K562 (cell line): ENCODE measurements at regions of chr12 and their contacts with region 1.

Region 1: DNA sequence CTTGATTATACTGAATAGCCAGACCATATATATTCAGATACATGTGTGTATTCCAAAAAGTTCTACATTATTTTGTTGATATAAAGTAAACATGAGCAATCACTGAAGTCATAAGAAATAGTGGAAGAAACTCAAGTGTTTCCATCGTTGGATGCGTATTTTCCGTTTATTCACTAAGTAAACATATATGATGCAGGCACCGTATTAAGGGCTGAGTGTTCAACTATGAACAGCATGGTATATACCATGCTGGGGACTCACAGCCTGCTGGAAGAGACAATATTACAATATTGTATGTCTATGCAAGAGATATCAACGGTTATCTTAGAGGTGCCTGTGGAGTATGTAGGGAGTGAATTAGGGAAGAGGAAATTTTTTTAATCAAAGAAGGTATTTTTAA is 1.2 kb downstream of the PYROXD1 start:
- DNase-seq: peak in 1 of 4 experiments; percentile 24
- ATAC-seq: peak; percentile 59
- H3K4me3 ChIP-seq: peak overlapping the region; percentile 70
- H3K27ac ChIP-seq: peak overlapping the region; percentile 96
- H3K4me1 ChIP-seq: peaks cover 0 to 6% of the 10 kb centered on the region in 2 experiments; a peak in 3 of 5 replicates
- H3K27me3 ChIP-seq: no peaks in the 10 kb centered on the region
- CTCF ChIP-seq: no peak
- EP300 ChIP-seq: no peak
- POLR2A ChIP-seq: no peak
- RAD21 ChIP-seq: no peak

Region 2: DNA sequence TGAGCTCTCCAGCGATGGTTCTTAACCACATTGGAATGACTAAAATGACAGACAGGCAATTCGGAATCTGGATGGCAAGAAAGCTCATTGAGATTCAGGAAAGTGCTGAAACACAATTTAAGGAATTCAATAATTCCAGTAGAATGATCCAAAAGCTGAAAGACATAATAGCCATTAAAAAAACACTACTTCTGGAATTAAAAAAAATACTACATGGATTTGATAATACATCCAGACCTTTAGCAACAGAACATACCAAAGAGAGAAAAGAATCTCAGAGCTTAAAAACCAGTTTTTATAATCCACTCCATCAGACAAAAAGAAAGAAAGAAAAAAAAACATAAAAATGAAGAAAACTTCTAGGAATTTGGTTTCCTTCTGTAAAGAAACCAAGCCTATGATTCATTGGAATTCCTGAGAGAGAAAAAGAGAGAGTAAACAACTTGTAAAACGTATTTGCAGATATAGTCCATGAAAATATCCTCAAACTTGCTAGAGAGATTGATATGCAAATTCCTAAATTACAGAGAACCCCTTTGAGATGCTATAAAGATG is 254.8 kb before region 1 on chr12:
- CTCF ChIA-PET with region 1: no interaction called
- POLR2A ChIA-PET with region 1: no interaction called
- in situ Hi-C with region 1: no loop called
- intact Hi-C with region 1: no loop called
- DNase-seq: no peak
- ATAC-seq: no peak
- H3K4me3 ChIP-seq: no peak overlapping the region
- H3K27ac ChIP-seq: no peak overlapping the region
- H3K4me1 ChIP-seq: no peaks in the 10 kb centered on the region
- H3K27me3 ChIP-seq: no peaks in the 10 kb centered on the region
- CTCF ChIP-seq: no peak
- EP300 ChIP-seq: no peak
- POLR2A ChIP-seq: no peak
- RAD21 ChIP-seq: no peak

Region 3: DNA sequence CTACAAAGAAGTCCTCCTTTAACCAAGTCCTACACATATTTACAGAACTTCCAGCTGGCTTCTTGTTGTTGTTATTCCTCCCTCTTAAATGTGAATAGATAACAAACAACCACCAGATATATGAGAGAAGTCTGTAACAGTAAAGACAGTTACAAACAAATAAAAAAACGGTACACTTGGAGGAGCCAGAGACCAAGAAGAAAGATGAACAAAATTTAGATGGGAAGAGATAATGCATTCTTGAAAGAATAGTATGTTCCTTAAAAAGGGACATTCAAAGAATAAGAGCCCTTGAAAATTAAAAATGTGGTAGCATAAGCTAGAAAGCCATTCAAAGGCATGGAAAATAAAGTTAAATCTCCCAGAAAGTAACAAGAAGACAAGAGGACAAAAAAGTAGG is 129.9 kb before region 1 on chr12:
- CTCF ChIA-PET with region 1: no interaction called
- POLR2A ChIA-PET with region 1: no interaction called
- in situ Hi-C with region 1: loop called (anchors 5 kb)
- intact Hi-C with region 1: loop called (anchors 1 kb)
- DNase-seq: no peak
- ATAC-seq: no peak
- H3K4me3 ChIP-seq: no peak overlapping the region
- H3K27ac ChIP-seq: no peak overlapping the region
- H3K4me1 ChIP-seq: no peaks in the 10 kb centered on the region
- H3K27me3 ChIP-seq: no peaks in the 10 kb centered on the region
- CTCF ChIP-seq: peak in 1 of 3 experiments; percentile 15; a peak in 1 of 6 replicates
- EP300 ChIP-seq: no peak
- POLR2A ChIP-seq: no peak
- RAD21 ChIP-seq: peak in 1 of 2 experiments; percentile 28; a peak in 1 of 4 replicates

Region 4: DNA sequence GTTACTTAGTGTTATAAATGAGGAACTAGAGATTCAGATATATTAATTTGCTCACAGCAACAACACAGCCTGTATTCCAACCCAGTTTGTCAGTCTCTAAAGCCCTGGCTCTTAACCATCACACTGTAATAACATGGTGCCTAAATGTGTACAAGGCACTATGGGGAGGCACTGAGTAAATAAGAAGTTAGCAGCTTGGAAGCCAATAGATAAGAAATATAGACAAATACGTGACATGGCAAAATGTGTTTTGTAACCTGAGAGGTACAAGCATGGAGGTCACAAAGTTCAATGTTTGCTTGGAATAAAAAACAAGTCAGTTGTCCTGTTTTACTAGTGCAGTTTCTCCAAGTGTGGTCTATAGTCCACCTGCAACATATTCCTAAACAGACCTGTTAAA is 87.7 kb before region 1 on chr12:
- CTCF ChIA-PET with region 1: interaction called, 4 read pairs
- POLR2A ChIA-PET with region 1: no interaction called
- in situ Hi-C with region 1: no loop called
- intact Hi-C with region 1: loop called (anchors 1 kb)
- DNase-seq: peak; percentile 51 to 72 (median 56)
- ATAC-seq: peak; percentile 94
- H3K4me3 ChIP-seq: no peak overlapping the region
- H3K27ac ChIP-seq: peak overlapping the region; percentile 61
- H3K4me1 ChIP-seq: peaks cover 0 to 30% of the 10 kb centered on the region in 2 experiments; a peak in 3 of 5 replicates
- H3K27me3 ChIP-seq: no peaks in the 10 kb centered on the region
- CTCF ChIP-seq: no peak
- EP300 ChIP-seq: peak; percentile 85
- POLR2A ChIP-seq: no peak
- RAD21 ChIP-seq: no peak

Region 5: DNA sequence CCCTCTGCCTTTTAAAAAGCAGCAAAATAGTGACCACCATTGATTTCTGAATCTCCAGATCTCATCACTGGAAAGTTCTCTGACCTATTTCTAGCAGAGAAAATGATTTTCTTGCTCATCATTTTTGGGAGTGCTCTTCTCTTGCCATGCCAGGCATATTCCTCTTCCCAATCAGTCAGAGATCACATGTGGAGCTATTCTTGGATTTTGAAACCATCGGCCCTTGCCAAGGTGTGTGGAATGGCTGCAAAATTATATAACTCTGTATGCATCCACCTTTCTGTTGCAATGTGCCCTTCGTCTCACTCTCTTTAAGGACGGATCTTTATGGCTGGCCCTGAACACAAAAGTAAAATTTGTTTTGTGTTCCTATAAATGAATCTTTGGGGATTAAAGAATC is 244.5 kb after region 1 on chr12:
- CTCF ChIA-PET with region 1: no interaction called
- POLR2A ChIA-PET with region 1: no interaction called
- in situ Hi-C with region 1: no loop called
- intact Hi-C with region 1: loop called (anchors 5 kb)
- DNase-seq: no peak
- ATAC-seq: no peak
- H3K4me3 ChIP-seq: no peak overlapping the region
- H3K27ac ChIP-seq: no peak overlapping the region
- H3K4me1 ChIP-seq: peaks cover 0 to 3% of the 10 kb centered on the region in 2 experiments; a peak in 3 of 5 replicates
- H3K27me3 ChIP-seq: no peaks in the 10 kb centered on the region
- CTCF ChIP-seq: no peak
- EP300 ChIP-seq: no peak
- POLR2A ChIP-seq: no peak
- RAD21 ChIP-seq: no peak